MCF 10A (cell line): ENCODE measurements at regions of chr14 and their contacts with region 1.

Region 1: GRCh38 chr14:64891839-64892375 is 12.2 kb upstream of the SPTB start:
- DNase-seq: peak; percentile 71
- H3K4me3 Mint-ChIP-seq: no peak overlapping the region
- H3K27ac Mint-ChIP-seq: no peak overlapping the region
- H3K4me1 Mint-ChIP-seq: no peaks in the 10 kb centered on the region
- H3K27me3 Mint-ChIP-seq: peaks cover 27% of the 10 kb centered on the region
- CTCF ChIP-seq: peak; percentile 63

Region 2: GRCh38 chr14:64671591-64671990 is 220.3 kb before region 1 on chr14:
- CTCF ChIA-PET with region 1: interaction called, 122 read pairs
- POLR2A ChIA-PET with region 1: no interaction called
- intact Hi-C with region 1: loop called (anchors 10 kb)
- DNase-seq: peak; percentile 81
- H3K4me3 Mint-ChIP-seq: no peak overlapping the region
- H3K27ac Mint-ChIP-seq: no peak overlapping the region
- H3K4me1 Mint-ChIP-seq: peaks cover 41% of the 10 kb centered on the region
- H3K27me3 Mint-ChIP-seq: no peaks in the 10 kb centered on the region
- CTCF ChIP-seq: peak; percentile 69

Region 3: GRCh38 chr14:64778104-64778754 is 113.7 kb before region 1 on chr14:
- CTCF ChIA-PET with region 1: interaction called, 18 read pairs
- POLR2A ChIA-PET with region 1: no interaction called
- intact Hi-C with region 1: no loop called
- DNase-seq: no peak
- H3K4me3 Mint-ChIP-seq: no peak overlapping the region
- H3K27ac Mint-ChIP-seq: no peak overlapping the region
- H3K4me1 Mint-ChIP-seq: peaks cover 3% of the 10 kb centered on the region
- H3K27me3 Mint-ChIP-seq: no peaks in the 10 kb centered on the region
- CTCF ChIP-seq: no peak

Region 4: DNA sequence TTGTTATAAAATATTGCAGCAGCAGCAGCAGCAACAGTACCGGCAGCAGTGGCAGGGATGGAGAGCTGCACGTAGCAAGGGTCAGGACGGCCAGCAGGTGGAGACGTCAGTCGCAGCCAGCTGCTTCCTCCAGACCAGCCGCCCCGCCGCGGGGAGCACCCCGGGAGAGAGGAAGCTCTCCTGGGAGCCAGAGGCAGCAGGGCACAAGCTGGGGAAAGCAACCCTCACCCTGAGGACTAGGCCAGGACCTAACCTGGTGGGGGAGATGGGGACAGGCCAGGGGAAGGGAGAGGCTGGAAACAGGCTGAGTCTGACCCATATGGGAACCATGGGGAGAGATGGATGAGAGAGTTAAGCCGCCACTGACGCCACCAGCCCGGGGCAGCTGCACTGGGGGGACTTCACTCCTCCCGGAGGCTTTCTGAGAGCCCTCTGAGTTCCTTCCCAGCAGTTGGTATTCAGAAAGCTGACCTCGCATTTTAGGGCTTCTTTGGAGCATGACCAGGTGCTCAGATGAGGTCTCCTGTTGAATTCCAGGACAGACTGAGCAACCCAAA is 68.5 kb before region 1 on chr14:
- CTCF ChIA-PET with region 1: interaction called, 235 read pairs
- POLR2A ChIA-PET with region 1: interaction called, 7 read pairs
- intact Hi-C with region 1: loop called (anchors 5 kb)
- DNase-seq: peak; percentile 65
- H3K4me3 Mint-ChIP-seq: no peak overlapping the region
- H3K27ac Mint-ChIP-seq: no peak overlapping the region
- H3K4me1 Mint-ChIP-seq: peaks cover 17% of the 10 kb centered on the region
- H3K27me3 Mint-ChIP-seq: peaks cover 24% of the 10 kb centered on the region
- CTCF ChIP-seq: peak; percentile 68

Region 5: DNA sequence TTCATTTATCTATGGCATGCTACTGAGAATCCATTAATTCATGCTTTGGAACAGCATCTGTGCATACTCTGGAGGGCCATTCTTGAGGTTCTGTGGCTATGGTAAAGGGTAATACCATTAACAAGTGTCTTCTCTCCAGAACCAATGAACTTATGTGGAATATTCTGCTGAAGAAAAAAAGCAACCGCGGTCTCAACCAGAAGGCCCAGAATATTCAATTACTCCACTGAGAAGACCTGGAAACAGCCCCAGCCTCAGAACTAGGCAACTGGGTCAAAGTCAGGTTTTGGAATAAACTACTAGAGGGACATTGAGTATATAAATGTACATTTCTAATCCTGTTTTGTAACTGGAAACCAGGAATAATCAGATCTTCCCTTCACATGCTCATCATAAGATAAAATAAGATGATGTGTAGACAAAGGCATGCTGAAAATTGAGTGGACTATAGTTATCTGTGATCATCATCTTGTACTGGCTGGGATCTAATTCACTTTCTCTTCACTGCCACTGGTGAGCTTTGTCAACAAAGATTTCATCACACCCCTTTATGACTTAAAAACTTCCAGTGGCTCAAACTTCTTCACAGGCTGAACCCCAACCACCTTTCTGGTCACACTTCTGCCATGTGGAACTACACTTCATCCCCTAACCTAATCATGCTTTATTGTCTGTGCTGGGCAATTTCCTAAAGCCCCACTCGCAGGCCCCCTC is 18.2 kb before region 1 on chr14:
- CTCF ChIA-PET with region 1: interaction called, 25 read pairs
- POLR2A ChIA-PET with region 1: interaction called, 4 read pairs
- intact Hi-C with region 1: no loop called
- DNase-seq: no peak
- H3K4me3 Mint-ChIP-seq: no peak overlapping the region
- H3K27ac Mint-ChIP-seq: no peak overlapping the region
- H3K4me1 Mint-ChIP-seq: no peaks in the 10 kb centered on the region
- H3K27me3 Mint-ChIP-seq: peaks cover 76% of the 10 kb centered on the region
- CTCF ChIP-seq: no peak